ENCODE measurements at regions of chr1 and their contacts with region 1.

Region 1: GRCh38 chr1:2545759-2546514 is 10.2 kb upstream of the TNFRSF14 start:
- DNase-seq: peak; percentile 74 to 90
- H3K4me3 ChIP-seq: peak overlapping the region; percentile 87
- H3K27ac ChIP-seq: peak overlapping the region; percentile 45
- H3K4me1 ChIP-seq: peaks cover 41% of the 10 kb centered on the region
- H3K27me3 ChIP-seq: no peaks in the 10 kb centered on the region
- CTCF ChIP-seq: no peak

Region 2: DNA sequence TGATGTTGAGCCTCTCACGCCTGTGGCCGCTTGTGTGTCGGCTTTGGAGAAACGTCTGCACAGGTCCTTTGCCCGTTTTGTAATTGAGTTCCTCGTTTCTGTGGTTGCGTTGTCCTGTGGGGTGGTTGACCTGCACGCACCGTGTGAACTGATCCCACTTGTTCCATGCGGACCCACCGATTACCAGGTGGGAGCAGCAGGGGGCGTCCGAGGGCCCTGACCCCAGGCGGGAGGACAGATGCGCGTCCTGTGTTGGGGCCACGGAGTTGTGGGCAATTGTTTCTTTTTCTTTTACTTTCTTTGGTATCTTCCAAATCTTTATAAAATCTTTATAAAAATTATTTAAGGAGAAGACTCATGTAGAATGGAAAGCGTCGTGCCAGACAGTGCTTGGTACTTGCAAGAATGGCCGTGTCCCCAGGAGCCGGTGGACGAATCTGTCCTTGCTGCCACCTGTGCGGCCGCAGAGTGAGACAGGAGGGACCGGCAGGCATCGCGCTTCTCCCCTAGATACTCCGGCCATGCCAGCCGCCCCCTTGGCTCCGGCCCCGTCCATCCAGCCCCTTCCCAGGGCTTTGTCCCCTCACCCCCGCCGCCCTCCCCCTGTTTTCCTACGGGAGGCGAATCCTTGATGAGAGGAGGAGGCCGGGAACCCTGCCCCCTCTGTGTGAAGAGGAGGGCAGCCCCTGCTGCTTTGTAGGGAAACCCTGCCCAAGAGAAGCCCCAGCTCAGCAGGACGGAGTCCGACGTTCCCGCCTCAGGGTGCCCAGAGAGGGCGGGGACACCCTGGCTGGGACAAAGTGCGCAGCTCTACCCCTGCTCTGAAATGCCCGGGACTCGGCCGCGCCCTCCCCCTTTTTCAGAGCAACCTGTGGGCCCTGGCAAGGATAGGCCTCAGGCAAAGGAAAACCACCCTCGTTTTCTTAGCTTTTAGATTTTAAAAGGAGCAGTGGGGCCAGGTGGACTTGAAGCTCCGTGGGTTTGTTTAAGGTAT is 454.0 kb before region 1 on chr1:
- CTCF ChIA-PET with region 1: no interaction called
- POLR2A ChIA-PET with region 1: interaction called, 13 read pairs
- intact Hi-C with region 1: no loop called
- DNase-seq: no peak
- H3K4me3 ChIP-seq: no peak overlapping the region
- H3K27ac ChIP-seq: no peak overlapping the region
- H3K4me1 ChIP-seq: no peaks in the 10 kb centered on the region
- H3K27me3 ChIP-seq: no peaks in the 10 kb centered on the region
- CTCF ChIP-seq: no peak

Region 3: GRCh38 chr1:2391041-2391930 is 154.7 kb before region 1 on chr1 and contains the starts of genes MORN1 and RER1:
- CTCF ChIA-PET with region 1: no interaction called
- POLR2A ChIA-PET with region 1: no interaction called
- intact Hi-C with region 1: loop called (anchors 1 kb)
- DNase-seq: peak; percentile 95 to 98
- H3K4me3 ChIP-seq: peak within 1 kb of the TSS; percentile 80
- H3K27ac ChIP-seq: no peak within 1 kb of the TSS
- H3K4me1 ChIP-seq: peaks cover 19% of the 10 kb centered on the region
- H3K27me3 ChIP-seq: no peaks in the 10 kb centered on the region
- CTCF ChIP-seq: no peak
- total RNA-seq, gene MORN1: 47.8 and 51.0 TPM in 2 replicates
- total RNA-seq, gene RER1: 109 and 131 TPM in 2 replicates

Region 4: GRCh38 chr1:2525920-2526823 is 19.8 kb before region 1 on chr1 and contains the start of gene PANK4:
- CTCF ChIA-PET with region 1: no interaction called
- POLR2A ChIA-PET with region 1: interaction called, 11 read pairs
- intact Hi-C with region 1: loop called (anchors 1 kb)
- DNase-seq: peak; percentile 80 to 85
- H3K4me3 ChIP-seq: peak within 1 kb of the TSS; percentile 96
- H3K27ac ChIP-seq: no peak within 1 kb of the TSS
- H3K4me1 ChIP-seq: peaks cover 18% of the 10 kb centered on the region
- H3K27me3 ChIP-seq: peaks cover 20% of the 10 kb centered on the region
- CTCF ChIP-seq: no peak; the same call in 1 of the 2 replicates
- total RNA-seq, gene PANK4: 20.5 and 33.4 TPM in 2 replicates

Region 5: GRCh38 chr1:2586154-2587070 is 40.5 kb after region 1 on chr1 and contains the start of gene PRXL2B:
- CTCF ChIA-PET with region 1: interaction called, 4 read pairs
- POLR2A ChIA-PET with region 1: interaction called, 9 read pairs
- intact Hi-C with region 1: loop called (anchors 1 kb)
- DNase-seq: peak; percentile 91 to 98
- H3K4me3 ChIP-seq: peak within 1 kb of the TSS; percentile 75
- H3K27ac ChIP-seq: peak within 1 kb of the TSS; percentile 2; the same call in 1 of the 2 replicates
- H3K4me1 ChIP-seq: no peaks in the 10 kb centered on the region
- H3K27me3 ChIP-seq: no peaks in the 10 kb centered on the region
- CTCF ChIP-seq: no peak
- total RNA-seq, gene PRXL2B: 26.1 and 35.3 TPM in 2 replicates

Measured in PC-9 (cell line).